Mucosa of descending colon (tissue), 3 donors: ENCODE measurements at regions of chrX and their contacts with region 1.

Region 1: DNA sequence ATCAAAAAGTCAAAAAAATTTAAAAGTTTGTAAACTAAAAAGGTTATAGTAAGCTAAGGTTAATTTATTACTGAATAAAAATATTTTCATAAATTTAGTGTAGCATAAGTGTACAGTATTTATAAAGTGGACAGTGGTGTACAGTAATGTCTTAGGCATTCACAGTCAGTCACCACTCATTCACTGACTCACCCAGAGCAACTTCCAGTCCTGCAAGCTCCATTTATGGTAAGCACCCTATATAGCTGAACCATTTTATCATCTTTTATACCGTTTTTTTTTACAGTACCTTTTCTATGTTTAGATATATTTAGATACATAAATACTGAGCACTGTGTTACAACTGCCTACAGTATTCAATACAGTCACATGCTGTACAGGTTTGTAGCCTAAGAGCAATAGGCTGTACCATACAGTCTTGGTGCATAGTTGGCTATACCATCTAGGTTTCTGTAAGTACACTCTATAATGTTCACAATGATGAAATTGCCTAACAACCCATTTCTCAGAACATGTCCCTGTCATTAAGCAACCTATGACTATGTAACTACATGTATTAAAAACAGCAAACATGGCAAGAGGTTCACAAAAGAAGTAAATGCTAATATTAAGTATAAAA is 18.6 kb downstream of the ACSL4 start:
- DNase-seq: no peak
- ATAC-seq: no peak
- H3K4me3 ChIP-seq: no peak overlapping the region
- H3K4me1 ChIP-seq: no peaks in the 10 kb centered on the region
- CTCF ChIP-seq: no peak

Region 2: GRCh38 chrX:109856974-109857373 is 142.5 kb after region 1 on chrX:
- intact Hi-C with region 1: loop called (anchors 10 kb)
- DNase-seq: peak in 1 of 3 donors; percentile 12
- ATAC-seq: no peak
- H3K4me3 ChIP-seq: no peak overlapping the region
- H3K4me1 ChIP-seq: no peaks in the 10 kb centered on the region
- CTCF ChIP-seq: peak; percentile 24